ENCODE measurements at regions of chr14 and their contacts with region 1.

Region 1: GRCh38 chr14:75577729-75578101 is 705 bp upstream of the FLVCR2 start:
- DNase-seq: peak; percentile 87
- H3K4me3 ChIP-seq: peak overlapping the region; percentile 73
- H3K27ac ChIP-seq: peak overlapping the region; percentile 87
- H3K4me1 ChIP-seq: peaks cover 44% of the 10 kb centered on the region
- H3K27me3 ChIP-seq: no peaks in the 10 kb centered on the region
- CTCF ChIP-seq: peak; percentile 86

Region 2: DNA sequence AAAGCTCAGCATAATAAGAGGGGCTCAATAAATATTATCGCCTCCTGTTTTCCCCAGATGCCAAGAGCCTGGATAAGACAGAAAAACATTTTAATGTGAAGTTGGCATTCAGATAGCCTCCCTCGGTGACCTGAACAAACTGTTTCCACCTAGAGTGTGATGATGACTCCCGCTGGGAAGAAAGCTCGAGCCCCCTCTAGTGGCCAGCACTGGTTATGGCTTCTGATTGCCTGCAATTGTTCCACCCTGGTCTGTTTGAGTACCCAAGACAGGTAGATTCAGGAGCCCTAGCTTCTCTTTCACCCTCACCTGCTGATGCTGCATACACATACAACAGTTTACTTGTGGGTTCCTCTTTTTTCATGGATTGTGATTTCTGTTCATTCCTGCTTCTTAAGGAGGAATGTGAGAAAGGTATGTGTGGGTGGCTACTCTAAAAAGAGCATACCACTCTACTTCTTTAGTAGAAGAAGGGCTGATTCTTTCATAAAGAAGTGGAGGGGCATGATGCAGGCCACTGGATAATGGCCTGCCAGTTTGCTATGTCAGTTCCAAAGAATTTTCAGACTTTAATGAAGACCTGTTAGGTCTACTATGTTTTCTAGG is 76.5 kb after region 1 on chr14:
- intact Hi-C with region 1: loop called (anchors 2 kb)
- DNase-seq: peak; percentile 78
- H3K4me3 ChIP-seq: no peak overlapping the region
- H3K27ac ChIP-seq: no peak overlapping the region
- H3K4me1 ChIP-seq: peaks cover 5% of the 10 kb centered on the region
- H3K27me3 ChIP-seq: no peaks in the 10 kb centered on the region
- CTCF ChIP-seq: peak; percentile 99

Measured in left ventricle myocardium inferior (tissue), 1 donor.